CD8-positive, alpha-beta memory T cell (primary cell): ENCODE measurements at regions of chr3 and their contacts with region 1.

Region 1: DNA sequence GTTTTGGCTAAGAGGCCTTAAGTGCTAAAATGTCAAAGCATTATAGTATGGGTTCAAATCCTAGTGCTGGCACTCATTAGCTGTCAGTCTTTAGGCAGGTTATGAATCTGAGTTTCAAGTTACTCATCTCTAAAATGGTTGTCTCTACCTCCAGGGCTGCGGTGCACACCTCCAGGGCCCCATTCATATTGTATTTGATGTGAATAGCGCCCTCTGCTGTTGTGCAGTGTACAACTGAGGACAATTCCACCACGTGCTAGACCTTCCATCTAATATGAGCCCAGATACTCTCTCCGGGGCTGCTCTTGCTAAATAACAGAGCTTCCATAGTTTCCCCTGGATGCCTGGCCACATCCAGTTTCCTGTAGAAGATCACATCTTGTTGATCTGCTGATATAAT is 54.3 kb downstream of the OXNAD1 start:
- DNase-seq: peak; percentile 65 to 88 (median 73)
- H3K4me3 ChIP-seq: no peak overlapping the region
- H3K4me3 Mint-ChIP-seq: peak overlapping the region in 6 of 7 donors; percentile 1 to 46 (median 30)
- H3K27ac ChIP-seq: no peak overlapping the region
- H3K27ac Mint-ChIP-seq: peak overlapping the region; percentile 79 to 98 (median 92)
- H3K4me1 ChIP-seq: peaks cover 61% of the 10 kb centered on the region
- H3K4me1 Mint-ChIP-seq: peaks cover 66 to 73% (median 66%) of the 10 kb centered on the region in 3 donors
- H3K27me3 ChIP-seq: no peaks in the 10 kb centered on the region
- H3K27me3 Mint-ChIP-seq: peaks cover 0 to 5% of the 10 kb centered on the region in 2 donors

Region 2: DNA sequence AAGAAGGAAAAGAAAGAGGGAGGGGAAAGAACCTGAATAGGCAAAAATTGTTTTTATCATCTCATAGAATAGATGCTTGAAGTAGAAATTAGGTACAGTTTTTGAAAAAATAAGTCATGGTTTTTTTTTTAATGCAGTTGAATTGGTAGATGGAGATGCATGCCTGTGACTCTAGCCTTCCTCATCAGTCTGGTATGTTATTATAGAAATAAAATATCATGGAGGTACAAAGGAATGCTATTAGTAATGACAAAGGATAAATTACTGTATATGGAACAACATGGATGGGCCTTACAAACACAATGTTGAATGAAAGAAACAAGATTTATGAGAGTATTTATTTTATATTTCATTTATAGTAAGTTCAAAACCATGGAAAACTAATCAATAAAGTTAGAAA is 307.2 kb before region 1 on chr3:
- CTCF ChIA-PET with region 1: no interaction called
- POLR2A ChIA-PET with region 1: no interaction called
- DNase-seq: no peak
- H3K4me3 ChIP-seq: no peak overlapping the region
- H3K4me3 Mint-ChIP-seq: no peak overlapping the region
- H3K27ac ChIP-seq: no peak overlapping the region
- H3K27ac Mint-ChIP-seq: no peak overlapping the region
- H3K4me1 ChIP-seq: no peaks in the 10 kb centered on the region
- H3K4me1 Mint-ChIP-seq: no peaks in the 10 kb centered on the region
- H3K27me3 ChIP-seq: no peaks in the 10 kb centered on the region
- H3K27me3 Mint-ChIP-seq: peaks cover 6 to 20% of the 10 kb centered on the region in 2 donors

Region 3: DNA sequence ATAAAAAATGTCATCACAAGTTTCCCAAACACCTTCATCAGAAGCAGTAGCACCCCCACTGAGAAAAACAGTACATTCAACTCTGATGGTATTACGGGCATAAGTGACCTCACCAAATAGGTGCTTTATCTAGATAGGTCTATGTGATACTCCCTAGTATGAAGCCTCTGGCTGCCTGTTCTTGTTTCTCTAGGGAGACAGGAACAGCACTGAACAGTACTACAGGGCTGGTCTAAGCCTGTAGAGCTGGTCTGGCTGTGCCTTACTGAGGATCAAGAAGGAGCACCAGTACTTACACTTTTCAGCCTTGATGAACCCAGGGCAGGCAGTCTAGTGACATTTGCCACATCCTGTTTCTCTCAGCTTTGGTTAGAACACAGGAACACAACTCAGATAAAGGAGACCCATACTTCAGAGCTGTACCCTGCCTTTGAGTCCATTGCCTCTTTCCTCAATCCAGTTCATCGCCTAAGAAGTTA is 18.4 kb before region 1 on chr3:
- CTCF ChIA-PET with region 1: interaction called, 286 read pairs
- POLR2A ChIA-PET with region 1: interaction called, 17 read pairs
- DNase-seq: peak; percentile 19 to 83 (median 75)
- H3K4me3 ChIP-seq: peak overlapping the region; percentile 40
- H3K4me3 Mint-ChIP-seq: peak overlapping the region; percentile 84 to 93 (median 88)
- H3K27ac ChIP-seq: peak overlapping the region; percentile 34
- H3K27ac Mint-ChIP-seq: peak overlapping the region; percentile 86 to 98 (median 95)
- H3K4me1 ChIP-seq: peaks cover 99% of the 10 kb centered on the region
- H3K4me1 Mint-ChIP-seq: peaks cover 91 to 99% (median 98%) of the 10 kb centered on the region in 3 donors
- H3K27me3 ChIP-seq: no peaks in the 10 kb centered on the region
- H3K27me3 Mint-ChIP-seq: no peaks in the 10 kb centered on the region

Region 4: GRCh38 chr3:16338999-16339398 is 19.7 kb after region 1 on chr3:
- CTCF ChIA-PET with region 1: interaction called, 18 read pairs
- POLR2A ChIA-PET with region 1: no interaction called
- DNase-seq: peak in 2 of 5 donors; percentile 34 to 59
- H3K4me3 ChIP-seq: no peak overlapping the region
- H3K4me3 Mint-ChIP-seq: peak overlapping the region in 6 of 7 donors; percentile 35 to 69 (median 46)
- H3K27ac ChIP-seq: peak overlapping the region; percentile 28
- H3K27ac Mint-ChIP-seq: peak overlapping the region; percentile 74 to 97 (median 91)
- H3K4me1 ChIP-seq: peaks cover 31% of the 10 kb centered on the region
- H3K4me1 Mint-ChIP-seq: peaks cover 61 to 81% (median 72%) of the 10 kb centered on the region in 3 donors
- H3K27me3 ChIP-seq: no peaks in the 10 kb centered on the region
- H3K27me3 Mint-ChIP-seq: peaks cover 0 to 1% of the 10 kb centered on the region in 2 donors

Region 5: GRCh38 chr3:16550676-16551341 is 231.5 kb after region 1 on chr3:
- CTCF ChIA-PET with region 1: interaction called, 13 read pairs
- POLR2A ChIA-PET with region 1: no interaction called
- DNase-seq: peak; percentile 45 to 78 (median 71)
- H3K4me3 ChIP-seq: no peak overlapping the region
- H3K4me3 Mint-ChIP-seq: no peak overlapping the region
- H3K27ac ChIP-seq: no peak overlapping the region
- H3K27ac Mint-ChIP-seq: peak overlapping the region in 4 of 8 donors; percentile 7 to 79 (median 65)
- H3K4me1 ChIP-seq: peaks cover 5% of the 10 kb centered on the region
- H3K4me1 Mint-ChIP-seq: peaks cover 6 to 10% (median 7%) of the 10 kb centered on the region in 3 donors
- H3K27me3 ChIP-seq: no peaks in the 10 kb centered on the region
- H3K27me3 Mint-ChIP-seq: peaks cover 1 to 21% of the 10 kb centered on the region in 2 donors